Posterior cingulate gyrus (tissue), 11 donors: ENCODE measurements at regions of chr19 and their contacts with region 1.

Region 1: GRCh38 chr19:56155124-56155687 is 14.1 kb downstream of the ZNF444 start:
- DNase-seq: no peak

Region 2: GRCh38 chr19:56105090-56105701 is 50.0 kb before region 1 on chr19:
- intact Hi-C with region 1: loop called (anchors 5 kb)
- DNase-seq: peak; percentile 42 to 94 (median 70)